Common myeloid progenitor, CD34-positive (primary cell): ENCODE measurements at regions of chr5 and their contacts with region 1.

Region 1: GRCh38 chr5:10310066-10310779 is 2.5 kb upstream of the CMBL start:
- DNase-seq: peak in 1 of 3 donors; percentile 53
- H3K4me3 ChIP-seq: no peak overlapping the region
- H3K27ac ChIP-seq: no peak overlapping the region
- H3K4me1 ChIP-seq: peaks cover 0 to 23% (median 17%) of the 10 kb centered on the region in 4 experiments
- H3K27me3 ChIP-seq: no peaks in the 10 kb centered on the region

Region 2: DNA sequence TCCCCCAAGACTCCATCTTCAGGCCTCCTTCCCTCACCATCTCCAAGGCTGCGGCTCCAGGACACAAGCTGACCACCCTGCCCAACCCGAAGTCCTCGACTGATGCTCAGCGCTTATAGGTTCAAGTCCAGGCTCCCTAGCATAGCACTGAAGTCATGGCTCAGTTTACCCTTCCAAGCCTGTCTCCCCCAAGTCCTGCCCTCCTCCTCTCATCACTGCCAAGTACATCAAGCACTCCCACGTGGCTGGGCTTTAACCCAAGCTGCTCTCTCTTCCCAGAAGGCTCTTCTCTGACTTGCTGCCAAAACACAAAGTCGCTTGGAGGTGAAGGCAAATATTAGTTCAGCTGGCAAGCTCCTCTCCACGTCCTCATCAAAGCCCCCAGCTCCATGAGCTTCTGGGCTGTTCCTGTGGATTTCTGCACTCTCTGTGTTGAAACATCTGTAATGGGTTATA is 21.1 kb after region 1 on chr5:
- CTCF ChIA-PET with region 1: interaction called, 21 read pairs
- POLR2A ChIA-PET with region 1: interaction called, 4 read pairs
- DNase-seq: no peak
- H3K4me3 ChIP-seq: no peak overlapping the region
- H3K27ac ChIP-seq: no peak overlapping the region
- H3K4me1 ChIP-seq: peaks cover 0 to 22% (median 13%) of the 10 kb centered on the region in 4 experiments
- H3K27me3 ChIP-seq: peaks cover 0 to 35% (median 6%) of the 10 kb centered on the region in 5 experiments